Naive thymus-derived CD4-positive, alpha-beta T cell (primary cell): ENCODE measurements at regions of chr3 and their contacts with region 1.

Region 1: GRCh38 chr3:60017631-60018030 is 967.8 kb upstream of the CFAP20DC start:
- DNase-seq: peak in 8 of 9 donors; percentile 58 to 88 (median 76)
- ATAC-seq: peak; percentile 92
- H3K4me3 ChIP-seq: peak overlapping the region; percentile 15
- H3K4me3 Mint-ChIP-seq: peak overlapping the region; percentile 53 to 88 (median 74)
- H3K27ac ChIP-seq: peak overlapping the region; percentile 66
- H3K27ac Mint-ChIP-seq: peak overlapping the region; percentile 91 to 99 (median 94)
- H3K4me1 ChIP-seq: peaks cover 37 to 60% of the 10 kb centered on the region in 2 donors
- H3K4me1 Mint-ChIP-seq: peaks cover 29 to 100% (median 88%) of the 10 kb centered on the region in 7 donors
- H3K27me3 ChIP-seq: no peaks in the 10 kb centered on the region
- H3K27me3 Mint-ChIP-seq: no peaks in the 10 kb centered on the region

Region 2: DNA sequence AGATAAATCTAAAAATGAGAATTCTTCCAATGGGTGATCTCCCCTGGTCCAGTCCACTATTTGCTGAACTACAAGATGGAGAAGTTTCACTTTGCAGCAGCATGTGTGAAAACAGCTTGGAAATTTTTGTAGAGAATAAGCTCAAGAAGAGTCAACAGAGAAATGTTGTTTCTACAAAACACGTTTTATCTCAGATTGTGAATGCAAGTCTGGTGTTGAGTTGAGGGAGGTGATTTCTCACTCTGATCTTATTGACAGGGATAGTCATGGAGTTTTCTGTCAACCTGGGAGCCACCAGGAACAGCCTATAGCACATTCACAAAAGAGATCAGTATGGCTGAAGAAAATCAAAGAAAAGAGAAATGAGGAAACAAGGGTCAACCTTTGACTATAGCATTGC is 13.4 kb after region 1 on chr3:
- CTCF ChIA-PET with region 1: interaction called, 4 read pairs
- POLR2A ChIA-PET with region 1: interaction called, 75 read pairs
- intact Hi-C with region 1: loop called in 1 of 2 experiments (anchors 1 kb)
- DNase-seq: no peak
- ATAC-seq: no peak
- H3K4me3 ChIP-seq: no peak overlapping the region
- H3K4me3 Mint-ChIP-seq: peak overlapping the region in 6 of 10 donors; percentile 2 to 82 (median 39)
- H3K27ac ChIP-seq: no peak overlapping the region
- H3K27ac Mint-ChIP-seq: peak overlapping the region in 8 of 9 donors; percentile 42 to 91 (median 84)
- H3K4me1 ChIP-seq: peaks cover 0 to 49% of the 10 kb centered on the region in 2 donors
- H3K4me1 Mint-ChIP-seq: peaks cover 30 to 97% (median 88%) of the 10 kb centered on the region in 7 donors
- H3K27me3 ChIP-seq: no peaks in the 10 kb centered on the region
- H3K27me3 Mint-ChIP-seq: no peaks in the 10 kb centered on the region

Region 3: GRCh38 chr3:60046210-60046609 is 28.6 kb after region 1 on chr3:
- CTCF ChIA-PET with region 1: no interaction called
- POLR2A ChIA-PET with region 1: interaction called, 4 read pairs
- intact Hi-C with region 1: loop called (anchors 1 kb)
- DNase-seq: no peak
- ATAC-seq: no peak
- H3K4me3 ChIP-seq: no peak overlapping the region
- H3K4me3 Mint-ChIP-seq: peak overlapping the region in 7 of 10 donors; percentile 2 to 66 (median 42)
- H3K27ac ChIP-seq: peak overlapping the region; percentile 15
- H3K27ac Mint-ChIP-seq: peak overlapping the region; percentile 27 to 99 (median 94)
- H3K4me1 ChIP-seq: peaks cover 6 to 50% of the 10 kb centered on the region in 2 donors
- H3K4me1 Mint-ChIP-seq: peaks cover 26 to 96% (median 90%) of the 10 kb centered on the region in 7 donors
- H3K27me3 ChIP-seq: no peaks in the 10 kb centered on the region
- H3K27me3 Mint-ChIP-seq: no peaks in the 10 kb centered on the region